CD8-positive, alpha-beta T cell (primary cell): ENCODE measurements at regions of chr17 and their contacts with region 1.

Region 1: DNA sequence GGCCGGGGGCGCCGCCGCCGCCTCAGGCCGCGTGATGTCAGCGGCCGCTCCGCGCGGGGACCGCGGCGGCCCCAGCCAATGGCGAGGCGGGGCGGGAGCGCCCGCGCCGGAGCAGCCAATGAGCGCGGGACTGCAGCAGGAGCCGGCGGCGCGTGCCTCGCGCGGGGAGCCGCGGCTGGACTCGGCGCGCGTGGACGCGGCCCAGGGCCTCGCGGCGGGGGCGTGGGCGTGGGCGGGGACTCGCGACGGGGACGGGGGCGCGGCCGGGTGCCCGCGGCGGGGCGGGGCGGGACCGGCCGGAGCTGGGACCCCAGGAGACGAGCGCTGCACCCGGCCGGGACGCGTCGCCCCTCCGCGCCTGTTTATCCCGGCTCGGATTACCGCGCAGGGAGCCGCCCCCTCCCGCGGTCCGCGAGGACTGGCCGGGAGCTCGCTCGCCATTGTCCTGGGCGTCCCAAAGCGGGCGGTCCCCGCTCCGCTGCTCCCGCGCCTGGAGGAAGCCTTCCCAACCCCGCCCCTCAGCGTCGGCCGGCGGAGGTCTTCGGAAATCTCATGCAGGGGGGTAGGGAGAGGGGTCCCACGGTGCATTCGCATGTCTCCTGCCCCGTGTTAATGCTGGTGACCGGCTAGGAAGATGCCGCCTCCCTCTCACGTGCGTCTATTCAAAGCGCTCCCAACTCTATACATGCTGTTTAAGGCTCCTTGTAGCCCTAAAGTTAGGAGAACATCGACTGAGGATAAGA is at the start of gene RNF157:
- DNase-seq: peak in 8 of 9 experiments; percentile 48 to 87 (median 64)
- ATAC-seq: peak; percentile 88
- H3K4me3 ChIP-seq: peak within 1 kb of the TSS; percentile 61 to 77
- H3K4me3 Mint-ChIP-seq: peak within 1 kb of the TSS; percentile 87
- H3K27ac ChIP-seq: peak within 1 kb of the TSS; percentile 49 to 63
- H3K27ac Mint-ChIP-seq: peak within 1 kb of the TSS; percentile 91
- H3K4me1 ChIP-seq: peaks cover 52% of the 10 kb centered on the region
- H3K4me1 Mint-ChIP-seq: peaks cover 54% of the 10 kb centered on the region
- H3K27me3 ChIP-seq: no peaks in the 10 kb centered on the region
- H3K27me3 Mint-ChIP-seq: no peaks in the 10 kb centered on the region
- CTCF ChIP-seq: no peak
- total RNA-seq, gene RNF157: 22.3 to 25.5 TPM

Region 2: DNA sequence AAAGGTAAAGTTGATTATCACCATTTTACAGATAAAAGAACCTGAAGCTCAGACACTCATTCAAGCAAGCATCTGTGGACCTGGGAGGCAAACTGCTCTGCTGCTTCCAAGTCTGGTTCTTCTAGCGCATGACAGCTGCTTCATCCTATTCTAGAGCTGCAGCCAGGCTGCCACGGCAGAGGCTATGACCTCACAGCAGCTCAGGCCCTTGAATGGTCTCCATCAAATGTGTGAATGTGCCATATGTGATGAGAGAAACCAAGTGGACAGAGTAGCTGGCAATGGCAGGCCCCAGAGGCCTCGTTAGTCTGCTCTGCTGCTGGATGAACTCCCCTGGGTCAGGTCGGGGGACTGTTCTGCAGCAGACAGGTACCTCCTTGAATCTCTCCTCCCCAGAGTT is 68.9 kb before region 1 on chr17:
- CTCF ChIA-PET with region 1: no interaction called
- POLR2A ChIA-PET with region 1: no interaction called
- intact Hi-C with region 1: no loop called
- DNase-seq: no peak
- ATAC-seq: no peak
- H3K4me3 ChIP-seq: no peak overlapping the region
- H3K4me3 Mint-ChIP-seq: no peak overlapping the region
- H3K27ac ChIP-seq: no peak overlapping the region
- H3K27ac Mint-ChIP-seq: no peak overlapping the region
- H3K4me1 ChIP-seq: peaks cover 11% of the 10 kb centered on the region
- H3K4me1 Mint-ChIP-seq: peaks cover 24% of the 10 kb centered on the region
- H3K27me3 ChIP-seq: no peaks in the 10 kb centered on the region
- H3K27me3 Mint-ChIP-seq: no peaks in the 10 kb centered on the region
- CTCF ChIP-seq: no peak

Region 3: DNA sequence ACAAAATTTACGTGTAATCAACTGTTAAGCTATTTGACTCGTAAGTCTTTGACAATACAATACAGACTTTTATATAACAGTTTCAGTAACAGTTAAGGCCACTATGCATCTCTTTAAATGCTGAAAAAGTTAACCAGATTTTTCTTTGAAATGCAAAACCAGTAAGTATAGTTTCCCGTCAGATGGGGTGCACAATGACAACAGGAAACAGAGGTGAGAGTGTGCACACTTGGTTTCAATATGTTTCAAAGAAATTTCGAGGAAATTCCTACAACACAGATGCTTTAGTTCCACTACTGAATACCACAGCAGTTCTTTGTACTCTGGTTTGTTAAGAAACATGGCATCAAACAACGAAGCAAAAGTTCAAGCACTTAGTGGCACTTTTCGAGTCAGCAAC is 48.7 kb before region 1 on chr17:
- CTCF ChIA-PET with region 1: interaction called, 11 read pairs
- POLR2A ChIA-PET with region 1: interaction called, 8 read pairs
- intact Hi-C with region 1: loop called in 1 of 2 experiments (anchors 2 kb)
- DNase-seq: peak in 5 of 9 experiments; percentile 32 to 89 (median 69)
- ATAC-seq: peak; percentile 80
- H3K4me3 ChIP-seq: peak overlapping the region; percentile 18 to 23
- H3K4me3 Mint-ChIP-seq: peak overlapping the region; percentile 65
- H3K27ac ChIP-seq: peak overlapping the region; percentile 59 to 60
- H3K27ac Mint-ChIP-seq: peak overlapping the region; percentile 94
- H3K4me1 ChIP-seq: peaks cover 93% of the 10 kb centered on the region
- H3K4me1 Mint-ChIP-seq: peaks cover 81% of the 10 kb centered on the region
- H3K27me3 ChIP-seq: no peaks in the 10 kb centered on the region
- H3K27me3 Mint-ChIP-seq: no peaks in the 10 kb centered on the region
- CTCF ChIP-seq: no peak

Region 4: DNA sequence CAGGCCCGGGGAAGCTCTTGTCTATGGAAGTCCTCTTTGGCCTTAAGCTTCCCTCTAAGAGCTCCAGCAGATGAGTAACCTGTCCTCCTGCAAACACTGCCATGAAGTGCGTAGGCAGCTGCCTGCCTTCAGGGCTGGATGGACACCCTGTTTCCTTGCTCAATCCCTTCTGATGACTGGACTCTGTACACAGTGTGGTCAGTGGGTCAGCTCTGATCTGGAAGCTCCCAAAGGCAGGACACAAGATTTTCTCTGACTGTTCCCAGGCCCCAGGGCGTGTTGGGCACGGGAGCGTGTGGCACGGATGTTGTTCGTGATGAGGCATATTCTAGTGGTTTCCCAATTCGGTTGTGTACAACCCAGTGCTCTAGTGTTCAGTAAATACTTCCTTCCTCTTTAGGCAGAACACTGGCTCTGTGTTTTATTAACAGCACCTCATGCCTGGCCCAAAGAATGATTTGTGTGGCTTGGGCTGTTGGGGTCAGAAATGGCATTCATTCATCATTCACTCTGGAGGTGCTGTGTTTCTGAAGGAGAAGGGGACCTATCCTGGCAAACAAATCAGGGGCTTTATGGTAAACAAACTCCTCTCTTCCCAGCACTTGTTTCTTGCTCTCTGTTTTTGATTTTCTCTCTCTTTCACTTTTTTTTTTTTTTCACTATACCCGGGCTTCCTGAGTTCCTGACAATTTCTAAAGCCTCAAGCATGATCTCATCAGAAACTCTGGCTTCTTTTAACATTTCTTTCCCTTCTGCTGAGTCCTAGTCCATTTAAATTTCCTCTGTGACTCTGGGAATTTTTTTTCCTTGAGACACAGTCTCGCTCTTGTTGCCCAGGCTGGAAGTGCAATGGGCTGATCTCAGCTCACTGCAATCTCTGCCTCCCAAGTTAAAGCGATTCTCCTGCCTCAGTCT is 11.7 kb after region 1 on chr17:
- CTCF ChIA-PET with region 1: interaction called, 6 read pairs
- POLR2A ChIA-PET with region 1: interaction called, 34 read pairs
- intact Hi-C with region 1: loop called (anchors 1 to 2 kb)
- DNase-seq: peak in 3 of 9 experiments; percentile 48 to 74 (median 70)
- ATAC-seq: peak; percentile 47
- H3K4me3 ChIP-seq: peak overlapping the region in 1 of 2 experiments; percentile 12
- H3K4me3 Mint-ChIP-seq: peak overlapping the region; percentile 61
- H3K27ac ChIP-seq: peak overlapping the region; percentile 7 to 74
- H3K27ac Mint-ChIP-seq: peak overlapping the region; percentile 96
- H3K4me1 ChIP-seq: peaks cover 44% of the 10 kb centered on the region
- H3K4me1 Mint-ChIP-seq: peaks cover 60% of the 10 kb centered on the region
- H3K27me3 ChIP-seq: no peaks in the 10 kb centered on the region
- H3K27me3 Mint-ChIP-seq: no peaks in the 10 kb centered on the region
- CTCF ChIP-seq: no peak

Region 5: DNA sequence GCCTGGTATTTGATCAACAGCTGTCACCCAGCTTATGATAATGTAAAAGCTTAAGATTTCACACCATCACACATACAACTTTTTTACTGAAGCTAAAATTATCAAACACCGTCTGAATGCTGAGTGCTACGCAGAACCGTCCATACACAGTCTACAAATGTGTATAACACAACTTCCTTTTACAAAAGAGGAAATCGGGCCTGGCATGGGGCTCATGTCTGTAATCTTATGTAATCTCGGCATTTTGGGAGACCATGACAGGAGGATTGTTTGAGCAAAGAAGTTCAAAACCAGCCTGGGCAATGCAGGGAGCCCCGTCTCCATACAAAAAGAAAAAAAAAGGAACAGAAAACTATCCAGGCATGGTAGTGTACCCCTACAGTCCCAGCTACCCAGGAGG is 87.1 kb after region 1 on chr17:
- CTCF ChIA-PET with region 1: no interaction called
- POLR2A ChIA-PET with region 1: no interaction called
- intact Hi-C with region 1: no loop called
- DNase-seq: no peak
- ATAC-seq: no peak
- H3K4me3 ChIP-seq: no peak overlapping the region
- H3K4me3 Mint-ChIP-seq: no peak overlapping the region
- H3K27ac ChIP-seq: no peak overlapping the region
- H3K27ac Mint-ChIP-seq: no peak overlapping the region
- H3K4me1 ChIP-seq: no peaks in the 10 kb centered on the region
- H3K4me1 Mint-ChIP-seq: no peaks in the 10 kb centered on the region
- H3K27me3 ChIP-seq: no peaks in the 10 kb centered on the region
- H3K27me3 Mint-ChIP-seq: no peaks in the 10 kb centered on the region
- CTCF ChIP-seq: no peak